Activated naive CD4-positive, alpha-beta T cell treated with anti-CD3 and anti-CD28 coated beads for 36 hours (primary cell): ENCODE measurements at regions of chr10 and their contacts with region 1.

Region 1: GRCh38 chr10:62244780-62245467 is 23.7 kb downstream of the RTKN2 start:
- DNase-seq: peak; percentile 74
- H3K4me3 Mint-ChIP-seq: no peak overlapping the region
- H3K27ac Mint-ChIP-seq: peak overlapping the region; percentile 76
- H3K4me1 Mint-ChIP-seq: peaks cover 38% of the 10 kb centered on the region
- H3K27me3 Mint-ChIP-seq: no peaks in the 10 kb centered on the region

Region 2: DNA sequence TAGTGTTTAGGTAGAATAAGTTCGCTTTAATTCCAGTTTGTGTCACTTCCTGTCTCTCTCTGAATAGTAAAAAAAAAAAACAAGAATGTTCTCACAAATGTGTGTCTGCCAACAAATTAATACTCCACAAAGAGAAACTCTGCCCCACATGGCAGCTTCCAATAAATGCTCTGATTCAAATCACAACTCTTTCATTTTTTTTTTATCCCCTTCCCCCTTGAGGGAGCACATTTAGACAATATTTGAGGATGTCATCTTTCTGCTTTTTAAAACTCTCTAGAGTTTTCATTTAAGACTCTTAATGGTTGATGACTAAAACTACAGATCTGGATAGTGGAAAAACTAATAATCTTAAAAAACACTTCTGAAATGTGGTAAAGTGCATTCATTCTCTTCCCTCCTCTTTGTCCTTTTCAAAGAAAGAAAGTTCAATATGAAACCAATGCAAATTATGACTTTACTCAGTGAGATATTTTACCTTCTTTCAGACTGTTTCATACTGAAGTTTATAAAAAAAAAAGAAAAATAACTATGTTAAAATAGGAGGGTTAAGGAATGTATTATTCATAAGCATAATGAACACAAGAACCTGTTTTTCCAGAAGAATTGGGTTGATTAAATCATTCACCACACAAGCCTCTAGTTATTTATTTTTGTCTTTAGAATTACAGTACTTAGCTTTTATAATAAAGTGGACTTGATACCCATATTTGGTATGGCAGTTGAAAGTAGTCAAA is 301.1 kb before region 1 on chr10:
- CTCF ChIA-PET with region 1: interaction called, 5 read pairs
- intact Hi-C with region 1: loop called (anchors 2 kb)
- DNase-seq: peak; percentile 47
- H3K4me3 Mint-ChIP-seq: peak overlapping the region; percentile 62
- H3K27ac Mint-ChIP-seq: peak overlapping the region; percentile 98
- H3K4me1 Mint-ChIP-seq: peaks cover 71% of the 10 kb centered on the region
- H3K27me3 Mint-ChIP-seq: no peaks in the 10 kb centered on the region

Region 3: GRCh38 chr10:62016623-62017490 is 228.1 kb before region 1 on chr10:
- CTCF ChIA-PET with region 1: no interaction called
- intact Hi-C with region 1: no loop called
- DNase-seq: no peak
- H3K4me3 Mint-ChIP-seq: no peak overlapping the region
- H3K27ac Mint-ChIP-seq: peak overlapping the region; percentile 67
- H3K4me1 Mint-ChIP-seq: peaks cover 73% of the 10 kb centered on the region
- H3K27me3 Mint-ChIP-seq: no peaks in the 10 kb centered on the region

Region 4: DNA sequence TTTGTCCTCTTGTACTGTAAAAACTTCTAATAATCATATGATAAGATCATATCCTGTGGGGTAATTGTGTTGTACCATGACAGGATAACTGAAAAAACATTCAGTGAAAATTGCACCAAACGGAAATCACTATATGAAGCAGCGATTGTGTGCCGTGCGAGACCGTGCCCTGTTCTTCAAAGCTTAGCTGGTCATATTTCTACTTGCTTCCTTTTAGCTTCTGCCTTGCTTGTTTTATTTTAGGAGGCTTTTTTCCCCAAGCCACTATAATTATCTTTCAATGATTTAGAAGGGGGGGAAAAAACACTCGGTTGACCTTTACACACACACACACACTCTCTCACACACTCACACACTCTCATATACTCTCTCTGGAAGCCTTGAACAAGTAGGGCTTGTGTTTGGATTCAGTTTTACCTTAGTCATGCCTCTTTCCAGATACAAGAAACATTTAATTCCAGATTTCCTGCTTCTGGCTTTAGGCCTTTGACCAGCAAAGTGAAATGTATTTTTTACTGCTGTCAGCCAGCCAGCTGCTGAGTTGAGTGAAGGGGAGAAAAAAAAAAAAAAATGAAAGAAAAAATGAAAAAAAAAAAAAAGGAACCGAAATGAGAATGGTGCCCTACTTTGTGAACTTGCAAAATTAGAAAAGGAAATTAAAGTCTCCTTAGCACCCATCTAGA is 162.1 kb before region 1 on chr10:
- CTCF ChIA-PET with region 1: interaction called, 8 read pairs
- intact Hi-C with region 1: loop called (anchors 2 kb)
- DNase-seq: peak; percentile 80
- H3K4me3 Mint-ChIP-seq: peak overlapping the region; percentile 41
- H3K27ac Mint-ChIP-seq: peak overlapping the region; percentile 89
- H3K4me1 Mint-ChIP-seq: peaks cover 86% of the 10 kb centered on the region
- H3K27me3 Mint-ChIP-seq: no peaks in the 10 kb centered on the region

Region 5: DNA sequence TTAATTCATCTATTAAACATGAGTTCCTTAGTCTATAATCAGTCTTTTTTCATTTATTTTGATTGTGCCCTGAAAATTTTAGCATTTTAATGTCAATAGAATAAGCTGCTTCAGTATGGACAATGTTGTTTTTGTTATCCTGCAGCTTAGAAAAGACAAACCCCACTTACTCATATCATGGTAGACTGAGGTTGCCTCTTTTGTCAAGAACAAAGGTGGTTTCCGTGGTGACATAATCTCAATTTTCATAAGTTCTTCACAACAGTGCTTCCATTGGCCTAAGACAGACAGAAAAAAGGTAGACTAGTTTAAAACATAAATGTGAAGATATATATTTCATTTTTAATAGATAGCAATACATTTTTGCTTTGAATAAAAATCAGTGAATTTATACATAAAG is 45.3 kb before region 1 on chr10:
- CTCF ChIA-PET with region 1: interaction called, 4 read pairs
- intact Hi-C with region 1: loop called (anchors 1 kb)
- DNase-seq: no peak
- H3K4me3 Mint-ChIP-seq: no peak overlapping the region
- H3K27ac Mint-ChIP-seq: peak overlapping the region; percentile 5
- H3K4me1 Mint-ChIP-seq: peaks cover 31% of the 10 kb centered on the region
- H3K27me3 Mint-ChIP-seq: no peaks in the 10 kb centered on the region

Region 6: DNA sequence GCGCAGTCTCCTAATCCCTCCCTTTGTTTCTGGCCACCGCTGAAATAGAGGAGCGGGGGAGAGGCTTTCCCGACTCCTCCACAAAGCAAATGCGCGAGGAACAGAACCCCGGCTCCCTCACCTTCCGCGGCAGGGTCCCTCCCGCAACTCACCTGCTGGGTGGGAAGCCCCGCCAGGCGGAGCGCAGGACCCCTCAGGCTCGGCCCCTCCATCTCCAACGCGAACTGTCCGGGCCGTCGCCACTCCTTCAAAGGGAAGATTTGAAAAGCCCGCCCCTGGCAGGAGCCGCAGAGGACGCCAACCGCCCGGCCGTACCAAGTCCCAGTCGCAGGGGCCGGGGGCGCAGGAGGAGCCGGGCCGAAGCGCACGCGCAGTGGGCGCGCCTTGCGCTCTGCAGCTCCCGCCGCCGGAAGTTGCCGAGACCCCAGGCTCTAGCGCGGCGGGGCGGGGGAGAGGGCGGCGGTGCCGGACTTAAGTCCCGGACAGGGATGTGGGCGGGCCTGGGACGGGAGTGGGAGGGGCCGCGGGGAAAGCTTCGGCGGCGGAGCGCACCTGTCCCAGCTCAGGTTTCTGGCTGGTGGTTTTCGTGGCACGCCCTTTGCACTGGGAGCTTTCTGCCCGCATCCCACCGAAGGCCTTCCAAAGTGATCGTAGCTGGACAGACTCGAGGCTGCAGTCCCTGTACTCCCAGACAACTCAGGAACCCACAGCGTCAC is 23.6 kb after region 1 on chr10 and contains the start of gene RTKN2:
- CTCF ChIA-PET with region 1: interaction called, 10 read pairs
- intact Hi-C with region 1: no loop called
- DNase-seq: peak; percentile 78
- H3K4me3 Mint-ChIP-seq: peak within 1 kb of the TSS; percentile 72
- H3K27ac Mint-ChIP-seq: peak within 1 kb of the TSS; percentile 28
- H3K4me1 Mint-ChIP-seq: peaks cover 23% of the 10 kb centered on the region
- H3K27me3 Mint-ChIP-seq: peaks cover 13% of the 10 kb centered on the region
- total RNA-seq, gene RTKN2: 4.7 to 5.4 TPM

Region 7: DNA sequence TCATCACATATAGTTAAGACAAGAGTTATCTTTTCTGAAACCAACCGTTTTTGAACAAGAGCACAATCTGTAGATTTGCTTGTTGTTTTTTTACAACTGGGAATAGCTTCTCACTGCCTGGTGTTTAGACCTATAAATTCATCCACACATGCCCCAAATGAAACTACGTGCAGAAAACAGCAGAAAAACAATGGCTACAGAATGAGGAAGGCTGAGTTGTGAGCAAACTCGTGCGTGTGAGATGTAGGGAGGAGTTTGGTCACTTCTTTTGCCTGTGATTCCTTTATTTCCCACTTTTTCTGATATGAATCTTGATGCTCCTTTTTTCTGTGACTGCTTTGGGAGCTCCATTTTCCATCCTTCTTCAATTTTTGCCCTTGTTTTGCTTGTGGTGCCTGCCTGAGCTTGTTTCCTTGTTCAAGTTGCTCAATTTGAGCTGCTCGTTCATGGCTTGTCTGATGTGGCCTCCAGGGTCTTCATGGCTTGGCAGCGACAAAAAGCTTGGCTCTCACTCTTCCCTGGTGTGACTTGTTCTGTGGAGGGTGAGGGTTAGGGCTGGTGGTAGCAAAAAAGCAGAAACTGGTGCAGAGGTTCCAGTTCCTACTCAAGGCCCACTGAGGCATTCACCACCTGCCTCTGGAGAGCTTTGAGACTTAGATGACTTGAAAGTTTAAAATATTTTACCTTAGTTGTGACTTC is 206.1 kb after region 1 on chr10:
- CTCF ChIA-PET with region 1: no interaction called
- intact Hi-C with region 1: no loop called
- DNase-seq: no peak
- H3K4me3 Mint-ChIP-seq: no peak overlapping the region
- H3K27ac Mint-ChIP-seq: no peak overlapping the region
- H3K4me1 Mint-ChIP-seq: no peaks in the 10 kb centered on the region
- H3K27me3 Mint-ChIP-seq: no peaks in the 10 kb centered on the region